Left ventricle myocardium inferior (tissue), 1 donor: ENCODE measurements at regions of chr1 and their contacts with region 1.

Region 1: GRCh38 chr1:115609021-115609420 is 32.7 kb upstream of the VANGL1 start:
- DNase-seq: no peak
- H3K4me3 ChIP-seq: no peak overlapping the region
- H3K27ac ChIP-seq: no peak overlapping the region
- H3K4me1 ChIP-seq: peaks cover 4% of the 10 kb centered on the region
- H3K27me3 ChIP-seq: peaks cover 6% of the 10 kb centered on the region
- CTCF ChIP-seq: no peak

Region 2: DNA sequence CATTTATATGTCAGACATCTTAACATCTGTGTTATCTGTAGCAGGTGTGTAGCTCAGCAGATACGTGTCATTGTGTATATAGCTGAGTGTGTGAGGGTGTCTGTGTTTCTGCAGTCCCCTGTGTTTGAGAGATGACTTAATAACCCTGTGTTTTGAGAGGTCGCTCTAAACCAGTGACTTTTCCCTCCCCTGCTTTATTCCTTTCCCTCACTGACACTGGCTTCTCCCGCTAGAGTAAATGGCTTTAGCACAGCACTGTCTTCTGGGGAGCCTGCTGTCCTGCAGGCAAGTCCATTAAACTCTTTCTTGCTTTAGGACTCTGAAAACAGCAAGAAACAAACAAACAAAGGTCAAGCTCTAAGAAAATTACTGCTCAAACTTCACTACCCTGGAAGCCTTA is 85.8 kb after region 1 on chr1:
- intact Hi-C with region 1: loop called (anchors 10 kb)
- DNase-seq: no peak
- H3K4me3 ChIP-seq: no peak overlapping the region
- H3K27ac ChIP-seq: no peak overlapping the region
- H3K4me1 ChIP-seq: peaks cover 13% of the 10 kb centered on the region
- H3K27me3 ChIP-seq: no peaks in the 10 kb centered on the region
- CTCF ChIP-seq: no peak

Region 3: DNA sequence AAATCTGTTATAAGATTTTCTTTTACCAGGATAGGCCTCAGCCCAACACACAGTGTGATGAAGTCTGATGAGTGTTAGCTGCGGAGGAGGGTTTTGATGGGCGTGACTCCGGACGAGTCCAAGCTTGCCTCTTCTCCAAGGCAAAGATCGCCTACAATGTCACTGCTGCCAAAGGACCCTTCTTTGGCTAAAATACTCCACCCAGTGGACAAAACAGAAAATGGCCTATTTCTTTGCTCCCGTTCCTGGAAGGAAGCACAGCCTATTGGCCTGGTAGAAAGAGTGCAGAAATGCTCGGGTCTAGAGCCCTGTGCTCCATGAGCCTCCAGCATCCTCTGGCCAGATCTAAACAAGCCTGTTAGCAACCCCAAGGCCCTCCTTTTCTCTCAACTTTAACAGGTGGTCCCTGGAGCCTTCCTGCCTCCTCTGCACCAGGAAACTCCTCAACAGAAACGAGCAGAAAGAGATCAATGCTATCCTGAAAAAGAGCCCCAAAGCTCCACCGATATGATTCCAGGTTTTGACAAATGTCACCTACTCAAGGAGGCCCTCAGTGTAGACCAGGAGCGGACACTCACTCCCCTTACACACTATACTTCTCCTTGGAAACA is 162.9 kb after region 1 on chr1:
- intact Hi-C with region 1: loop called (anchors 10 kb)
- DNase-seq: peak; percentile 54
- H3K4me3 ChIP-seq: peak overlapping the region; percentile 41
- H3K27ac ChIP-seq: peak overlapping the region; percentile 69
- H3K4me1 ChIP-seq: peaks cover 24% of the 10 kb centered on the region
- H3K27me3 ChIP-seq: no peaks in the 10 kb centered on the region
- CTCF ChIP-seq: peak; percentile 81